Uterus (tissue), 4 donors: ENCODE measurements at regions of chr17 and their contacts with region 1.

Region 1: DNA sequence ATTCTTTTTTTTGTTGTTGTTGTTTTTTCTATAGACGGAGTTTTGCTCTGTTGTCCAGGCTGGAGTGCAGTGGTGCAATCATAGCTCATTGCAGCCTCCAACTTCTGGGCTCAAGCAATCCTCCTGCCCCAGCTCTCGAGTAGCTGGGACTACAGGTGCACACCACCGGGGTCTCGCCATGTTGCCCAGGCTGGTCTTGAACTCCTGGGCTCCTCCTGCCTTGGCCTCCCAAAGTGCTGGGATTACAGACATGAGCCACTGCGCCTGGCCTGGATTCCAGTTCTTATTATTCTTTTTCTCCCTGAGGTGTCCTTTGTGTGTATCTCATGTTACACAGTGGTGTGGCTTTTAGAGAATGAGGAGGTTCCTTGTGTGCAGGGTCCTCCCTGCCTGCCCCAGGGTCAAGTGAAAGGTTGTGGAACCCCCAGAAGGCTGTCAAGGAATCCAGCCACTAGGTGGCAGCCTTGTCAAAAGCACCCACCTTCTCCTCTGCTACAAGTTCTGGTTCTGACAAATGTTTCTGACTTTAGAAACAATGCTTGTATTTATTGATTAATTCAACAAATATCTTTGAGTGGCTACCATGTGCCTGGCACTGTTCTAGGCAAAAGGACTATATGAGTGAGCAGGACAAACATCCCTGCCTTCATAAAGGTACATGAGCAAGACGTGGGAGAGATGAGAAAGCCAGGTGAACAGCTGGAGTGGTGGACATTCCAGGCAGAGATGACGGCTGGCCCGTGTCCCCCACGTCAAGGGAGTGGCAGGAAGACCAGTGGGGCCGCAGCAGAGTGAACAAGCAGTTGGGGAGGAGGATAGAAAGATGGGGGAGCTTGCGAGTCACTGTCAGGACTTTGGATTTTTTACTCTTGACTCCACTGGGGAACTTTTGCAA is 112.4 kb downstream of the SPECC1 start:
- DNase-seq: peak; percentile 58 to 60
- H3K4me3 ChIP-seq: no peak overlapping the region
- H3K27ac ChIP-seq: no peak overlapping the region
- H3K4me1 ChIP-seq: no peaks in the 10 kb centered on the region
- H3K27me3 ChIP-seq: no peaks in the 10 kb centered on the region
- CTCF ChIP-seq: peak; percentile 70 to 81 (median 76)
- POLR2A ChIP-seq: no peak

Region 2: DNA sequence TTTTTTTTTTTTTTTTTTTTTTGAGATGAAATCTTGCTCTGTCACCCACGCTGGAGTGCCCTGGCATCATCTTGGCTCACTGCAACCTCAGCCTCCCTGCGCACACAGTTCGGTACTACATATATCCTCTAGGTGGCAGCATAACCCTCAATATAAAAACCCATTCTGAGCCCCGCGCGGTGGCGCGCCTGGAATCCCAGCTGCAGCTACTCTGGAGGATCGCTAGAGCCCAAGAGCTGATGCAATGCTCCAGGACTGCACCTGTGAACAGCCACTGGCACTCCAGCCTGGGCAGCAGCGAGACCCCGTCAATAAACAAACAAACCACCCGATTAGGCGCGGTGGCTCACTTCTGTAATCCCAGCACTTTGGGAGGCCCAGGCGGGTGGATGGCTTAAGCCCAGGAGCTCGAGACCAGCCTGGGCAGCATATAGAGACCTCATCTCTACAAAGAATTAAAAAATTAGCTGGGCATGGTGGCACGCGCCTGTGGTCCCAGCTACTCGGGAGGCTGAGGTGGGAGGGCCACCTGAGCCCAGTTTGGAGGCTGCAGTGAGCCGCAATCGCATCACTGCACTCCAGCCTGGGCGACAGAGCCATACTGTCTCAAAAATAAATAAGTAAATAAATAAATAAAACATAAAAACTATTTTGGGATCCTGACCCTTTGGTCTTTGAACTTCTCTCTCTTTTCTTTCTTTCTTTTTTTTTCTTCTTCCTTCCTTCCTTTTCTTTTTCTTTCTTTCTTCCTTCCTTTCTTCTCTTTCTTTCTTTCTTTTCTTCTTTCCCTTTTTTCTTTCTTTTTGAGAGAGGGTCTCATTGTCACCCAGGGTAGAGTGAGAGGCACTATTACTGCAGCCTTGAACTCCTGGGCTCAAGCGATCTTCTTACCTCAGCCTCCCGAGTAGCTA is 128.5 kb before region 1 on chr17:
- intact Hi-C with region 1: loop called (anchors 5 kb)
- DNase-seq: peak; percentile 85 to 89
- H3K4me3 ChIP-seq: no peak overlapping the region
- H3K27ac ChIP-seq: no peak overlapping the region
- H3K4me1 ChIP-seq: no peaks in the 10 kb centered on the region
- H3K27me3 ChIP-seq: no peaks in the 10 kb centered on the region
- CTCF ChIP-seq: peak; percentile 73 to 91 (median 84)
- POLR2A ChIP-seq: no peak

Region 3: GRCh38 chr17:20155258-20156195 is 33.9 kb after region 1 on chr17:
- intact Hi-C with region 1: no loop called
- DNase-seq: peak; percentile 94 to 97
- H3K4me3 ChIP-seq: peak overlapping the region; percentile 27 to 72
- H3K27ac ChIP-seq: peak overlapping the region; percentile 56 to 80
- H3K4me1 ChIP-seq: no peaks in the 10 kb centered on the region
- H3K27me3 ChIP-seq: no peaks in the 10 kb centered on the region
- CTCF ChIP-seq: peak in 3 of 4 experiments; percentile 4 to 23 (median 5)
- POLR2A ChIP-seq: peak; percentile 50 to 73

Region 4: GRCh38 chr17:20226814-20227482 is 105.3 kb after region 1 on chr17:
- intact Hi-C with region 1: loop called (anchors 10 kb)
- DNase-seq: peak; percentile 83 to 85
- H3K4me3 ChIP-seq: no peak overlapping the region
- H3K27ac ChIP-seq: peak overlapping the region; percentile 9 to 67
- H3K4me1 ChIP-seq: no peaks in the 10 kb centered on the region
- H3K27me3 ChIP-seq: no peaks in the 10 kb centered on the region
- CTCF ChIP-seq: peak; percentile 68 to 88 (median 79)
- POLR2A ChIP-seq: no peak